ENCODE measurements at regions of chr5 and their contacts with region 1.

Region 1: DNA sequence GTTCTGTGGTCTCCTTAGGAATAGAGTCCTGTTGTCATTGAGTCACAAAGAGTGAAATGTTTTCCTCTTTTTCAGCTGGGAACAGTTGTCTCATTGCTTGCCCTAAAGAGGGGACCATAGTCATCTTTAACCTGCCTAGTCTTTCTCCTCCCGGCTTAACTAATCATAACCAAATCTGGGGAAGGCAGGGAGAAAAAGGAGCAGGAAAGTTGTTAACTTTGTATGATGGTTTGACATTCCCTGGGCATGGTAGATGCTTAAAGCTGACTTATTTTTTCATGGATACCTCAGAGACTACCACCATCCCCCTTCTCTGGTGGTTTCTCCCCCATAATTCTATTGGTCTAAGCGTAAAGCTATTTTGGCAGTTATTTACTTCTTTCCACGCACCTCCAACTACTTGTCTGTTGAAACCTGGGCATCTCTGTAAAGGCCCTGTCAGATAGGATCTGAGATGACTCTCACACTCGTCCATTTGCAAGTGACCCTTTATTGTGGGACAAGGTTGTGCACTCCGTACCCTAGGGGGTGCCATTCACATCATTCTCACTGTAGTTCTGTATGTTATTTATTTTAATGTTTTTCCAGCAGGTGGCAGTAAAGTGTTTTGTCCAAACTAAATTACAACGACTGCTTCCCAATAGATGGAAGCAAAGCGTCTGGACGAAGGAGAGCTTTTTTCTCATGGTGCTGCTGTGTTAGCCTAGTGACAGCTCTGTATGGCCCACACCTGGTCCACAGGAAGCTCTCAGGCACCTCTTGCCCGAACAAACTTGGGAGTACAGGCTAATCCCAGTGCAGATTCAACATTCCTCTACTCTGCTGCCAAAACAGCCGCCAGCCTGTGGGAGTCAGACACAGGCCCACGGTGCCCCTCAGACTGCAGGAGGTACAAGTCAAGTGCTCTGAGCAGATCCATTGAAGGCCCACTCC is 3.0 kb upstream of the FAM13B start:
- DNase-seq: peak; percentile 60
- H3K4me3 Mint-ChIP-seq: peak overlapping the region; percentile 38
- H3K27ac Mint-ChIP-seq: peak overlapping the region; percentile 72
- H3K4me1 Mint-ChIP-seq: peaks cover 46% of the 10 kb centered on the region
- H3K27me3 Mint-ChIP-seq: no peaks in the 10 kb centered on the region

Region 2: DNA sequence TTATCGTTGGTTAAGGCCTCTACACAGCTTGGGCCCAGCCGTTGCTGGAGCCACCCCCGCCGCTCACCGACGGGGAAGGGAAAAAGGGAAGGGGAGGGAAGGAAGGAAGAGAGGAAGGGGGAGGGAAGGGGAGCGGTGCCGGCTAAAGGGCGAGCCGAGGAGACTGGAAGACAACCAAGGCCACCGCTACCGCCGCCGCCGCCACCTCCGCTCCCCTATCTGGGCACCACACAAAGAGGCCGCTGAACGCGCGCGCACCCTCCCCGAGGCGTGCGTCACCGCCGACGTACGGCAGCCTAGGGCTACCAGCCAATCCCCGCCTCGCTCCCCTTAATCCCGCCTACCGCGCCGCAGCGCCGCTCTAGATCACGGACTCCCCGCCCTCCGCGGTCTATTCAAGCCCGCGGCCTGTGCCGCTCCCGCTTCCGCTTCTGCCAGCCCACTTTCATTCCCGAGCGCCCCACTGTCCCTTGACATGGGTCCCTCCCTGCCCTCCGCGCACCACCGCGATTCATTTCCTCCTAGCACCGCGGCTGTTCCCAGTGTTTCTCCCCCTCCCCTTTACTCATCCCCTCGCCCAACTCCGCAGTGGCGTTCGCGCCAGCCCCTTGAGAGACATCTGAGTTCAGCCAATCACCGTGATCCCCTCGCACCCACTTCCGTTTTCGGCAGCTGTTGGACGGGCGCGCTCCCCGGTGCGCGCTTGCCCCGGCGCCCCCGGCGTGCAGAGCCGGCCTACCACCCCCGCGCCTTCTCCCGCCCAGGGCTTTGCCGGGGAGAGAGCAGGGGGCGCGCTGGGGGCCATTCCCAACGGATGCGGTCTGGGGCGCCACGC is 281.5 kb before region 1 on chr5 and contains the start of gene HNRNPA0:
- intact Hi-C with region 1: loop called (anchors 1 kb)
- DNase-seq: peak; percentile 94
- H3K4me3 Mint-ChIP-seq: peak within 1 kb of the TSS; percentile 97
- H3K27ac Mint-ChIP-seq: peak within 1 kb of the TSS; percentile 100
- H3K4me1 Mint-ChIP-seq: peaks cover 22% of the 10 kb centered on the region
- H3K27me3 Mint-ChIP-seq: peaks cover 8% of the 10 kb centered on the region
- total RNA-seq, gene HNRNPA0: 37.5 and 37.8 TPM in 2 replicates

Region 3: DNA sequence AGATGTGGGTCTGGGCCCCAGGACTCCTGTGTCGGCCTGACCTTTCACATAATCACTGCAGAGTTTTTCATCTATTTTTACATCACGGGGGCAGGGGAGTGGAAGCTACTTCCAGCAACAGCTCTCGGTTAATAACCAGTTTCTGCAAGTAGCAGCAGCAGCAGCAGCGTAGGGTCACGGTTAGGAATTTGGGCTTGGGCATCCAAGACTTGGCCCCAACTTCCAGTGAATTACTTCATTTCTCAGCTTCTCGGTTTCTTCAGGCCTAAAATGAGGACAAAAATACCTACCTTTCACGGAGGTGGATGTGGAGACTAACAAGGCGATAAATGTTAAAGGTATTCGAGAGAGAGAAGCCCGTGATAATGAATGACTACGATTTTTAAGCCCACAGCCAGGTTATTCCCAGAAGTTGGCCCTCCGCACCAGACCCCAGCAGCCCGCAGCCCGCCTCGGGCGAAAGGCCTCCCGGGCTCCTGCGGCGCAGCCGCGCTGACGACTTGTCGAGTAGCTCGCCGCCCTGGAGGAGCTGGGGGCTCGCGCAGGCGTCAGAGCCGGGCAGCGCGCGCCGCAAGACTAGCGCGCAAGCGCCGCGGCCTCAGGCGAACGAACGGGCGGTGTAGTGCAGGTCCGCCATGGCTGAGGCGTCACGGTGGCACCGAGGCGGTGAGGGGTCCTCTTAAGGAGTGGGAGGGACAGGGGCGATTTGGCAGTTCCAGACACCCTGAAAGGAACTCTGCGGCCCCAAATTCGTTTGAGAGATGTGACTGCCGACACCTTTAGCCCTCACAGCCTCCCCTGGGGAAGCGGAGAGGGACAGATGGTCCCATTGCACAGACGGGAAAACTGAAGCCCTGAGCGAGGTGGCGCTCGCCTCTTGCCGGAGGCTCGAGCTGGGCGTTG is 146.8 kb before region 1 on chr5 and contains the start of gene PKD2L2:
- intact Hi-C with region 1: loop called (anchors 2 kb)
- DNase-seq: peak; percentile 82
- H3K4me3 Mint-ChIP-seq: peak within 1 kb of the TSS; percentile 84
- H3K27ac Mint-ChIP-seq: peak within 1 kb of the TSS; percentile 89
- H3K4me1 Mint-ChIP-seq: peaks cover 24% of the 10 kb centered on the region
- H3K27me3 Mint-ChIP-seq: peaks cover 2% of the 10 kb centered on the region
- total RNA-seq, gene PKD2L2: not detected in 2 replicates

Region 4: DNA sequence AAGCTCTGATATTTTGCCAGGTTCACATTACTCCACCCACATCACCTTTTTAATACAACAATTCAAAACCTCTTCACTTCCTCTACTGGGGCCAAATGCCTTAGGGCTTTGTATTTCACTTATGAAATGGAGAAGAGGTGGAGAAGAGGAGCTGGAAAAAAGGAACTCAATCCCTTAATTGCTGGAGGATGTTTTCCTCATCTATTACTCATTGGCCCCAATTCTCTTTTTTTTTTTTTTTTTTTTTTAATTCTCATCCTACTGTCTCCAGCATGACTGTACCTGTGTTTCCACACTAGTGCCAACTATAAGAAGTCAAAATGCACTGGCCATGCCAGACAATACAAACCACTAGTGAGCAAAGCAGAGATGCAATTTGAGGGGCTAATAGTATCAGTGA is 23.9 kb before region 1 on chr5:
- intact Hi-C with region 1: no loop called
- DNase-seq: no peak
- H3K4me3 Mint-ChIP-seq: no peak overlapping the region
- H3K27ac Mint-ChIP-seq: no peak overlapping the region
- H3K4me1 Mint-ChIP-seq: no peaks in the 10 kb centered on the region
- H3K27me3 Mint-ChIP-seq: no peaks in the 10 kb centered on the region

Region 5: DNA sequence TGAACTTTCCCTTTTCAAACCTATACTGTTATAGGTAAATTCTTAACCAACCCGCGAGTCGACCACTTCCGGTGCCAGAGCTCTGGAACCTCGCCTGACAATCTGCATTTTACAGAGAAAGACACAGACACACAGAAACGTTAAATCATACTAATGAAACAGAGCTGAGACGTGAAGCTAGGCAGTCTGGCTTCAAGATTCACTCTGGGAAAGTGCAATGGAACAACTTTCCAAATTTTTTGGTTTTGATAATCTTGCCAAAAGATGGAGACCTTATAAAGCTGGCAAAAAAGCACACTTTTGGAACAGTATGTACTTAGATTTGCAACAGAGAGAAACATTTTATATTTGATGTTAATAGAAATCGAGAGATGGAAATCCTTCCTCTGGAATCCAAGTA is 32.1 kb after region 1 on chr5:
- intact Hi-C with region 1: loop called (anchors 1 kb)
- DNase-seq: no peak
- H3K4me3 Mint-ChIP-seq: no peak overlapping the region
- H3K27ac Mint-ChIP-seq: no peak overlapping the region
- H3K4me1 Mint-ChIP-seq: peaks cover 14% of the 10 kb centered on the region
- H3K27me3 Mint-ChIP-seq: no peaks in the 10 kb centered on the region

Region 6: GRCh38 chr5:138128334-138128733 is 92.5 kb after region 1 on chr5:
- intact Hi-C with region 1: loop called (anchors 1 kb)
- DNase-seq: no peak
- H3K4me3 Mint-ChIP-seq: no peak overlapping the region
- H3K27ac Mint-ChIP-seq: no peak overlapping the region
- H3K4me1 Mint-ChIP-seq: peaks cover under 1% of the 10 kb centered on the region
- H3K27me3 Mint-ChIP-seq: peaks cover 16% of the 10 kb centered on the region

Region 7: DNA sequence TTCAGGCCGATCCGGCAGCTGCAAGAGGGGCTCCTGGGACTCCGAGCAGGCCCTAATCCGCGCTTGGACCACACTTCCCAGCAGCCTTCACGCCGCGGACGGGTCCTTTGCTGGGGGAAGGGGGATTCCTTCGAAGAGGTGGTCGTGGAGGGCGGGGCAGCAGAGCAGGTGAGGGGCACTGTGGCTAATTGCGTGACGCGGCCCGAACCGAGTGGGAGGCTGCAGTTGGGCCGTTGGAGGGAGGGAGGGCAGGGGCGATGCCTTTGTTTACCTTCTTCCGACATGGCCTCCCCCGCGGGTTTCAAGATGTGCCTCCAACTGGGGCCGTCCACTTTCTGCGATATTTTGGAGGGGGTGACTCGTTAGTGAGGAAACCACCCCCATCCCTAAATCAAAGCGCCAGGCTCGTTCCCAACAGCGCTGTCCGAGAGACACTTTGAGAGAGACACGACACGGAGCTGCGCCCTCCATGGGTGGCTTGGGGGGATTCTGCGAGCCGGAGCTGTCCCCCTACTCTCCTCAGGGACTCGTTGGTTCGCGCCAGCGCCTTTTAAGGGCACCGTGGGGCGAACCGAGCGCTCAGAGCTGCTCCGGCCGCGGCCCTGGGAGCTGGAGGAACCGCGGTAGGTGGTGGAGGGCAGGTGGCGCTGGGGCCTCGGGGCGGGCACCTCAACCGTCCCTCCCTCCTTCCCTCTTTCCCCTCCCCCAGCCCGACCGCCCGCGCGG is 302.0 kb after region 1 on chr5 and contains the start of gene FAM53C:
- intact Hi-C with region 1: loop called (anchors 5 kb)
- DNase-seq: peak; percentile 90
- H3K4me3 Mint-ChIP-seq: peak within 1 kb of the TSS; percentile 94
- H3K27ac Mint-ChIP-seq: peak within 1 kb of the TSS; percentile 99
- H3K4me1 Mint-ChIP-seq: peaks cover 44% of the 10 kb centered on the region
- H3K27me3 Mint-ChIP-seq: no peaks in the 10 kb centered on the region
- total RNA-seq, gene FAM53C: 27.0 and 29.2 TPM in 2 replicates

Region 8: GRCh38 chr5:138438724-138439476 is 403.0 kb after region 1 on chr5 and contains the start of gene REEP2:
- intact Hi-C with region 1: loop called (anchors 1 kb)
- DNase-seq: peak; percentile 53
- H3K4me3 Mint-ChIP-seq: peak within 1 kb of the TSS; percentile 77
- H3K27ac Mint-ChIP-seq: peak within 1 kb of the TSS; percentile 67
- H3K4me1 Mint-ChIP-seq: peaks cover 13% of the 10 kb centered on the region
- H3K27me3 Mint-ChIP-seq: peaks cover 6% of the 10 kb centered on the region
- total RNA-seq, gene REEP2: 5.1 and 5.4 TPM in 2 replicates

Measured in activated T-helper 1 cell treated with anti-CD3 and anti-CD28 coated beads, Interleukin-12 subunit alpha, Interleukin-12 subunit beta, Interleukin-2, Interleukin-4 antibody, amounts not matched to agents 30 ng/mL and 10 ng/mL and 1 ng/mL, durations not matched to agents 14 hours and 24 hours and 36 hours (primary cell).